IMR-90 (cell line): ENCODE measurements at regions of chrX and their contacts with region 1.

Region 1: DNA sequence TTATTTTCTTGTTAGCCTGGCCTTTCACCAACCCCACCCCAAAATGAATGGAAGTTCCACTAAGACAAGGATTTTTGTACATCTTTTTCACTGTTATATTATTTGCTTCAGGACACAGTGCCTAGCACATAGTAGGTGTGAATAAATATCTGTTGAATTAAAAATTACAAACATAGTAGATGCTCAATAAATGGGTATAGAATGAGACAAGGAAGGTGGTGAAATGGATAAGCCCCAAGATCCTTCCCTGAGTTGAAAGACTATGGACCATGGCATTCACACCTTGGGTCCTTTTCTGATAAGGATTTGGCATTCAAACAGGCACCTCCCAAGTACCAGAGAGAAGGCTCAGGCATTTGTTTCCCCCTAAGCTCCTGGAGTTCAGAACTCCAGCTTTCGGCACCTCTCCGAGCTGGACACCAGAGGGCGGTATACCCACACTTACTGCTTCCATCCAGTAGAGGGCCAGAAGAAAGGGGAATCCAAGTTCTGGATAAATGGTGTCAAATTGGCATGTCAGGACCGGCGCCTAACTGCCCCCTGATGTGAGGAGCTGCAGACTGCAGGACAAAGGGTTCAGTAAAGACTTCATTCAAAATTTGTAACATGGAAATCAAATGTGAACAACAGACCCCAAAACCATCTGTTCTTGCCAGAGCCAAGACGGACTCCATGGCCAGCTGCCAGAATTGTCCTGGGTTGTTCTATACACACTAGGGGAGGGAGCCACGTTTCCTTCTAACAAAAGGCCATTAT is 193.0 kb downstream of the GPC3 start:
- DNase-seq: peak; percentile 66
- ATAC-seq: peak; percentile 92
- H3K4me3 ChIP-seq: no peak overlapping the region
- H3K27ac ChIP-seq: no peak overlapping the region
- H3K4me1 ChIP-seq: no peaks in the 10 kb centered on the region
- H3K27me3 ChIP-seq: peaks cover 2% of the 10 kb centered on the region
- CTCF ChIP-seq: peak; percentile 100
- POLR2A ChIP-seq: no peak
- RAD21 ChIP-seq: peak; percentile 69

Region 2: DNA sequence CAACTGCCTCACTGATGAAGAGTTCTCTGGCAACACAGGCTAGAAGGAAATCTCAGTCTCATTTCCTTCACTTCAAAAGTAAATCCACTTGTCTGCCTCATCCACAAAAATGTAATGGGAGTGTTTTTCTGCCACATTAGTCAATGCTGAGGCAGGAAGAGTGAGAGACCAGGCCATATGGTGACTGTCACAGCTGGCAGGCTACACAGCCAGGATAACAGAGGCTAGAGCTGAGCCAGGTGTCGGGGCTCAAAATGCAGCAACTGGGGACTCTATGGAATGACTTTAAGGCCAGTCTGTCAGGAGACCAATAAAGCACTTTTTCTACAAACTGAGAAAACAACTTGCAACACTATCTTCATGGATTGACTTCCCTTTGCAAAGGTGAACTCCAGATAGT is 11.2 kb before region 1 on chrX:
- CTCF ChIA-PET with region 1: interaction called, 15 read pairs
- POLR2A ChIA-PET with region 1: no interaction called
- dilution Hi-C with region 1: no loop called
- in situ Hi-C with region 1: no loop called
- intact Hi-C with region 1: no loop called
- DNase-seq: no peak
- ATAC-seq: no peak
- H3K4me3 ChIP-seq: no peak overlapping the region
- H3K27ac ChIP-seq: no peak overlapping the region
- H3K4me1 ChIP-seq: no peaks in the 10 kb centered on the region
- H3K27me3 ChIP-seq: peaks cover 11% of the 10 kb centered on the region
- CTCF ChIP-seq: no peak
- POLR2A ChIP-seq: no peak
- RAD21 ChIP-seq: no peak

Region 3: DNA sequence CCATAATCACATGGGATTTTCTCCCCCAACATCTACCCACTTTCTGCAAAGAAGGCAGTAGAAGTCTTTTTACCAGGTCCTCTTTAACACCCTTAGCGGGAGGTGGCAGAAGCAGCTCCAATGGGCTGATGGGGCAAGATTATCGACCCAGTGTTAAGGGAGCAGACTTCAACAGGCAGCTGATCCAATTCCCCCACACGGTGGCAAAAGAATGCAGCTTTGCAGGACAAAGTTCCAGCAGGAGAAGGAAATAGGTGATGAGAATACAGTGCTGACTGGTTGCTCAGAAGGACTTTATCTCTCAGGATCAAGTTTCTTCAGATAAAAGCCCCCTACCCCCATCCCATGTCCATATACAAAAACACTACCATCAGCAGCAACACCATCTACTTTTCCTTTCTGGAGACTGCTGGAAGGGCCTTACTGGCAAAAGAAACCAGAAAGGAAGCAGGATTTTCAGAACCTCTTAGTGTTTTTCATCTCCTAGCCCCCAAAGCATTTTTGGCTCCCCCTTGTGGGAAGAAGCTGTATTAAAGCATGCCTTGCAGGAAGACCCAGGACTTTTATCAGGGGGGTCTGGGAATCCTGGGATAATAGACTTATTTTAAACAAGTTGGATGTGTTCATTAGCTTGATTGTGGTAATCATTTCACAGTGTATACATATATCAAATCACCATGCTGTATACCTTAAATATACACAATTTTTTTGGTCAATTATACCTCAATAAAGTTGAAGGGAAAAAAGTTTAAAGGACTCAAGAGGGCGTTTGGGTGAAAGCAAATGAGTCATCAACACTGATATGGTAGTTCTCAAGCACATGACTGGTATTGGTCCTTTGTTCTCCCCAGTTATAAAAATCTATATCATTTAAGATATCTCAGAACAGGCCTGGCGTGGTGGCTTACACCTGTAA is 46.6 kb after region 1 on chrX:
- CTCF ChIA-PET with region 1: interaction called, 5 read pairs
- POLR2A ChIA-PET with region 1: no interaction called
- dilution Hi-C with region 1: no loop called
- in situ Hi-C with region 1: no loop called
- intact Hi-C with region 1: loop called (anchors 1 kb)
- DNase-seq: peak; percentile 28
- ATAC-seq: peak; percentile 57; the same call in 1 of the 2 replicates
- H3K4me3 ChIP-seq: no peak overlapping the region
- H3K27ac ChIP-seq: no peak overlapping the region
- H3K4me1 ChIP-seq: no peaks in the 10 kb centered on the region
- H3K27me3 ChIP-seq: peaks cover 6% of the 10 kb centered on the region
- CTCF ChIP-seq: peak; percentile 55
- POLR2A ChIP-seq: no peak
- RAD21 ChIP-seq: peak; percentile 22; the same call in 1 of the 2 replicates

Region 4: GRCh38 chrX:133921764-133922389 is 129.5 kb after region 1 on chrX:
- CTCF ChIA-PET with region 1: interaction called, 7 read pairs
- POLR2A ChIA-PET with region 1: no interaction called
- dilution Hi-C with region 1: no loop called
- in situ Hi-C with region 1: no loop called
- intact Hi-C with region 1: loop called (anchors 1 kb)
- DNase-seq: peak; percentile 5
- ATAC-seq: no peak; the same call in 1 of the 2 replicates
- H3K4me3 ChIP-seq: no peak overlapping the region
- H3K27ac ChIP-seq: no peak overlapping the region
- H3K4me1 ChIP-seq: no peaks in the 10 kb centered on the region
- H3K27me3 ChIP-seq: no peaks in the 10 kb centered on the region; the same call in 1 of the 2 replicates
- CTCF ChIP-seq: peak; percentile 33; the same call in 1 of the 2 replicates
- POLR2A ChIP-seq: no peak
- RAD21 ChIP-seq: no peak

Region 5: DNA sequence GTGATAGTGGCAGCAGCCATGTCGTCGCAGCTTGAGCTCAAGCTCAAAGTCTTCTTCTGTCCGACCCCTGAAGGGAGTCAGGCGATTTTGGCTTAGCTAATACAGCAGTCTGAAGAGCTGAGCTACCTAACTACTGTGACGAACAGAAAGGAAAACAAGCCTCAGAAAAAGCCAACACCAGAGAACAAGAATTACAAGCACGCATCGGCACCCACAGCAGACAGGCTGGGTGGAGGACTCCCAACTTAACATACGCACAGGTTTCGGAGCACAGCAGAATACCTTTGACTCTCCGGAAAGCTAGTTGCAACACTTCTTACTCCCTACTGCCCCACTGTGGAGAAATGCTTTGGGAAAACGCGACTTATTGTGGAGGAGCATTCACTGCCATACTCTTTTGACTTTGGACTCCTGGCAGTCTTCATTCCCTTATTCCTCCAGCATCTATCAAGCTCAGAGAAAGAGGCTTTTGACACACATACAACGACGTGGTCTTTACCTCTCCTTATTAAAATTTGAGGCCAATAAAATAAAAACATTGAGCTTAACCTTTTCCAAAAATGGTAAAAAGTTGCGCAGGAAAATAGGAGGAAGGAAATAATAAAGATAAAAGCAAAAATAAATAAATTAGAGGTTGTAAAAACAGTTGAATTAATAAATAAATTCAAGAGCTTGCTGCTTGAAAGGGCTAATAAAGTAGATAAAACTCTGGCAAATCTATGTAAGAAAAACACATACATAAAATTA is 234.4 kb after region 1 on chrX:
- CTCF ChIA-PET with region 1: interaction called, 3 read pairs
- POLR2A ChIA-PET with region 1: no interaction called
- dilution Hi-C with region 1: no loop called
- in situ Hi-C with region 1: no loop called
- intact Hi-C with region 1: loop called (anchors 1 kb)
- DNase-seq: peak; percentile 5
- ATAC-seq: 0 out of 2 replicates have a peak, but pooled peaks have one; percentile 51
- H3K4me3 ChIP-seq: no peak overlapping the region
- H3K27ac ChIP-seq: no peak overlapping the region
- H3K4me1 ChIP-seq: no peaks in the 10 kb centered on the region
- H3K27me3 ChIP-seq: no peaks in the 10 kb centered on the region
- CTCF ChIP-seq: peak; percentile 27; the same call in 1 of the 2 replicates
- POLR2A ChIP-seq: no peak
- RAD21 ChIP-seq: no peak

Region 6: GRCh38 chrX:134074151-134074550 is 281.8 kb after region 1 on chrX:
- CTCF ChIA-PET with region 1: no interaction called
- POLR2A ChIA-PET with region 1: no interaction called
- dilution Hi-C with region 1: no loop called
- in situ Hi-C with region 1: no loop called
- intact Hi-C with region 1: no loop called
- DNase-seq: no peak
- ATAC-seq: no peak
- H3K4me3 ChIP-seq: no peak overlapping the region
- H3K27ac ChIP-seq: no peak overlapping the region
- H3K4me1 ChIP-seq: no peaks in the 10 kb centered on the region
- H3K27me3 ChIP-seq: no peaks in the 10 kb centered on the region
- CTCF ChIP-seq: no peak
- POLR2A ChIP-seq: no peak
- RAD21 ChIP-seq: no peak

Region 7: GRCh38 chrX:134144231-134144630 is 351.9 kb after region 1 on chrX:
- CTCF ChIA-PET with region 1: interaction called, 3 read pairs
- POLR2A ChIA-PET with region 1: no interaction called
- dilution Hi-C with region 1: no loop called
- in situ Hi-C with region 1: no loop called
- intact Hi-C with region 1: loop called (anchors 1 kb)
- DNase-seq: peak; percentile 1
- ATAC-seq: peak; percentile 65
- H3K4me3 ChIP-seq: no peak overlapping the region
- H3K27ac ChIP-seq: no peak overlapping the region
- H3K4me1 ChIP-seq: no peaks in the 10 kb centered on the region
- H3K27me3 ChIP-seq: no peaks in the 10 kb centered on the region; the same call in 1 of the 2 replicates
- CTCF ChIP-seq: peak; percentile 40
- POLR2A ChIP-seq: no peak
- RAD21 ChIP-seq: no peak